WTC11 (cell line): ENCODE measurements at regions of chr3 and their contacts with region 1.

Region 1: GRCh38 chr3:65107174-65107573 is 419.4 kb upstream of the ADAMTS9 start:
- DNase-seq: no peak
- ATAC-seq: no peak
- H3K4me3 Mint-ChIP-seq: no peak overlapping the region
- H3K27ac Mint-ChIP-seq: no peak overlapping the region
- H3K4me1 Mint-ChIP-seq: no peaks in the 10 kb centered on the region
- H3K27me3 Mint-ChIP-seq: no peaks in the 10 kb centered on the region; the same call in 1 of the 2 replicates
- CTCF ChIP-seq: no peak

Region 2: GRCh38 chr3:65070968-65071367 is 36.2 kb before region 1 on chr3:
- CTCF ChIA-PET with region 1: no interaction called
- POLR2A ChIA-PET with region 1: interaction called, 10 read pairs
- DNase-seq: no peak
- ATAC-seq: no peak
- H3K4me3 Mint-ChIP-seq: no peak overlapping the region
- H3K27ac Mint-ChIP-seq: no peak overlapping the region
- H3K4me1 Mint-ChIP-seq: peaks cover 8% of the 10 kb centered on the region
- H3K27me3 Mint-ChIP-seq: peaks cover 9% of the 10 kb centered on the region
- CTCF ChIP-seq: no peak